ENCODE measurements at regions of chr3 and their contacts with region 1.

Region 1: GRCh38 chr3:130946889-130947288 is 53.0 kb downstream of the ATP2C1 start:
- DNase-seq: no peak
- H3K4me3 ChIP-seq: no peak overlapping the region
- H3K27ac ChIP-seq: no peak overlapping the region
- H3K4me1 ChIP-seq: no peaks in the 10 kb centered on the region
- H3K27me3 ChIP-seq: no peaks in the 10 kb centered on the region
- CTCF ChIP-seq: no peak
- POLR2A ChIP-seq: no peak

Region 2: DNA sequence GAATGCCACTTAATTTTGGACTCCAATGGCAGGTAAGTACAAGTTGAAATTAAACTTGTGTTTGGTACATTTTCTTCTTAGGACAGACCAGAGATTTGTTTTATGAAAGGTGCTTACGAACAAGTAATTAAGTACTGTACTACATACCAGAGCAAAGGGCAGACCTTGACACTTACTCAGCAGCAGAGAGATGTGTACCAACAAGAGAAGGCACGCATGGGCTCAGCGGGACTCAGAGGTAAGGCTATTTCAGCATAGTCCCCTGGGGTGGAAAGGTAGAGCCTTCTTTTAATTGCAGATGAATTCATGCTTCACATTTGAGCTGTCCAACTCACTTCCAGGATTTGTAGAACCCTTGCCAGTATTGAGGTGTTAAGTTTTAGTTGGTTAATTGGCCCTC is 28.4 kb after region 1 on chr3:
- intact Hi-C with region 1: loop called (anchors 2 kb)
- DNase-seq: no peak
- H3K4me3 ChIP-seq: no peak overlapping the region
- H3K27ac ChIP-seq: no peak overlapping the region
- H3K4me1 ChIP-seq: no peaks in the 10 kb centered on the region
- H3K27me3 ChIP-seq: no peaks in the 10 kb centered on the region
- CTCF ChIP-seq: no peak
- POLR2A ChIP-seq: no peak